Left colon (tissue), 2 donors: ENCODE measurements at regions of chr17 and their contacts with region 1.

Region 1: GRCh38 chr17:979538-980405 is at the start of gene NXN:
- DNase-seq: peak; percentile 72 to 89
- ATAC-seq: peak; percentile 96
- total RNA-seq, gene NXN: 3.9 to 14.5 TPM

Region 2: DNA sequence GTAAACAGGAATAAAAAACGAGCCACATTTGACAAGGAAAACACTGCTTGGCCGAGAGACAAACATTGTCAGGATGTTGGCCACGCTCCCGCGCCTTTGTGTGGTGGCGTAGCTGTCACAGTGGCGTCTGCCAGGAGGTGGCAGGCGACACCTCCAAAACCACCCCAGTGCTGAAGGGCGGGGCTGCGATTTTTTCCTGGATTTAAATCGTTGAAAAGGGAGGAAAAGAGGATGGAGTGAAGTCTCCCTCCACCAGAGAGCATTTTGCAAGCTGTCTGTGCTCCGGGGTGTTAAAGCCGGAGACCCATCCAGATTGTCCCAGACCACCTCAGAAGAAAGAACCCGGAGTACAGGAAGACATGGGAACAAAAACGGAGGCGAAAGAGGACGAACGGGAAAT is 184.9 kb before region 1 on chr17:
- intact Hi-C with region 1: loop called (anchors 10 kb)
- DNase-seq: peak; percentile 63 to 82
- ATAC-seq: peak; percentile 97

Region 3: GRCh38 chr17:1031711-1032110 is 51.9 kb after region 1 on chr17:
- intact Hi-C with region 1: no loop called
- DNase-seq: peak; percentile 38 to 43
- ATAC-seq: peak; percentile 18